ENCODE measurements at regions of chr2 and their contacts with region 1.

Region 1: DNA sequence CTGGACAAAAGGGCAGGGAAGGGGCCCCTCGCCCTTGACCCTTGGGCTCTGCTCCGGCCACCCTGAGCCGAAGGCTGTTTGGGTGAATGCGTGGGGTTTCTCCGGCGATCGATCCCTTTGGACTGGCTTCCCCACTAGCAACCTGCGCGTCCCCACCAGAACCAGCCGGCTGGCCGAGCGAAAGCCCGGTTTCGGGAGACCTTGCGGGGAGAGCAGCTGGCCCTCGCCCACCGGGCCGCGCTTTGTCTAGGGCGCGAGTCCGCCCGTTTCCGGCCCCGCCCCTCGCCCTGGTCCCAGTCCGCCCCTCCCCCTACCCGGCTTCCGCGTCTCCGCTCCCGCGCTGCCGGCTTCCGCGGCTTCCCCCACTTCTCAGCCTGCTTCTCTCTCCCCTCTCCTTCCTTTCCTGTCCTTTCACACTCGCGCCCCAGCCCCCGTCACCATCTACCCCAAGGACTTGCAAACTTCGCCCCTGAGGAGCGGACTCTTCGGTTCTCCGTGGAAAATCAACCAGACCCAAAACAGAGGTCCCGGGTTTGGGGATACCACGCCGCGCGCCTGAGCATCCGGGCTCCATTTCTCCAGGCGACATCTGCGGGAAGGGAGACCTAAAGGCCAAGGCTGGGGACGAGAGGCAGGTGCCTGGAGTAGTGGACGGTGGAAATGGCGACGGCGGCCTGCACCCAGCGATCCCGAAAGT is 48.0 kb upstream of the ATP6V1B1 start:
- DNase-seq: no peak
- ATAC-seq: no peak
- H3K4me3 ChIP-seq: peak overlapping the region in 4 of 5 experiments; percentile 8 to 43 (median 35)
- H3K4me3 Mint-ChIP-seq: peak overlapping the region; percentile 67
- H3K27ac ChIP-seq: no peak overlapping the region
- H3K27ac Mint-ChIP-seq: peak overlapping the region; percentile 37
- H3K4me1 ChIP-seq: peaks cover 31 to 34% of the 10 kb centered on the region in 2 donors
- H3K4me1 Mint-ChIP-seq: peaks cover 31% of the 10 kb centered on the region
- H3K27me3 ChIP-seq: peaks cover 0 to 71% (median 58%) of the 10 kb centered on the region in 4 experiments
- H3K27me3 Mint-ChIP-seq: peaks cover 85% of the 10 kb centered on the region
- CTCF ChIP-seq: no peak

Region 2: DNA sequence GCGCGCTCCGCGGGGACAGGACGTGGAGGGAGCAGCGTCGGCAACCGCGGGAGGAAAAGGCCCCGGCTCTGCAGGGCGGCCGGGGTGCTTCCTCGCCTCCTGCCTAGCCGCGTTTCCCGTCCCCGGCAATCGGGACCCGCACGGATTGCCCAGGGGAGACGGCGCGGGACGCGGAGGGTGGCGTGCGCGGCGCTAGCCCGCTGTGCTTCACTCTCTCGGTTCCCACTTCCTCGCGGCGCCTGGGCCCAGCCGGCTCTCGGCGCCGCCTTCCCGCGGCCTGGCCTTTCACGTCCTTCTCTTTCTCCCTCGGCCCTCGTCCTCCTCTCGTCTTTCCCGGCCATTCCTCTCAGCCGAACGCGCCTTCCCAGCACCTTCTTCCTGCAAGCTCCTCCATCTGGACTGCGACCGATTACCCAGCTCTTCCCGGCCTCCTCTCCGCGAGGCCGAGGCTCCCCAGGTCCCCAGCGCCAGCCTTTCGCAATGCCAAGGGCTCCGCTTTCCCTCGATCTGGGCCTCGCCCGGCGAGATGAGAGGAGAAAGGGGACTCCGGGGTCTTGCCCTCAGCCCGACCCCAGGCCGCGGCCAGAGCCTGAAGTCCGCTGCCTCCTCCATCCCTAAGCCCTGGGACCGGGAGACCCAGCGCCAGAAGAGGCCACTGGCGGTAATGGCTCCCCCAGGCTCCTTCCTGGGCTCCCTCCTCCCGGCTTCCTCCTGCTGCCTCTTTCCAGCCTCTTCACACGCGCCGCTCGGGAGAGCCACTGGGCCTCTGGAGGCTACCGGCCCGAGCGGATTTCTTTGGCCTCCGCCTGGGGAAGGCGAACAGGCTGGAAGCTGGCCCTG is 13.7 kb after region 1 on chr2:
- CTCF ChIA-PET with region 1: no interaction called
- POLR2A ChIA-PET with region 1: no interaction called
- intact Hi-C with region 1: loop called (anchors 2 kb)
- DNase-seq: peak; percentile 47
- ATAC-seq: no peak
- H3K4me3 ChIP-seq: peak overlapping the region in 3 of 5 experiments; percentile 18 to 29 (median 29)
- H3K4me3 Mint-ChIP-seq: peak overlapping the region; percentile 64
- H3K27ac ChIP-seq: no peak overlapping the region
- H3K27ac Mint-ChIP-seq: no peak overlapping the region
- H3K4me1 ChIP-seq: peaks cover 29 to 34% of the 10 kb centered on the region in 2 donors
- H3K4me1 Mint-ChIP-seq: peaks cover 27% of the 10 kb centered on the region
- H3K27me3 ChIP-seq: peaks cover 0 to 96% (median 60%) of the 10 kb centered on the region in 4 experiments
- H3K27me3 Mint-ChIP-seq: peaks cover 75% of the 10 kb centered on the region
- CTCF ChIP-seq: no peak

Region 3: DNA sequence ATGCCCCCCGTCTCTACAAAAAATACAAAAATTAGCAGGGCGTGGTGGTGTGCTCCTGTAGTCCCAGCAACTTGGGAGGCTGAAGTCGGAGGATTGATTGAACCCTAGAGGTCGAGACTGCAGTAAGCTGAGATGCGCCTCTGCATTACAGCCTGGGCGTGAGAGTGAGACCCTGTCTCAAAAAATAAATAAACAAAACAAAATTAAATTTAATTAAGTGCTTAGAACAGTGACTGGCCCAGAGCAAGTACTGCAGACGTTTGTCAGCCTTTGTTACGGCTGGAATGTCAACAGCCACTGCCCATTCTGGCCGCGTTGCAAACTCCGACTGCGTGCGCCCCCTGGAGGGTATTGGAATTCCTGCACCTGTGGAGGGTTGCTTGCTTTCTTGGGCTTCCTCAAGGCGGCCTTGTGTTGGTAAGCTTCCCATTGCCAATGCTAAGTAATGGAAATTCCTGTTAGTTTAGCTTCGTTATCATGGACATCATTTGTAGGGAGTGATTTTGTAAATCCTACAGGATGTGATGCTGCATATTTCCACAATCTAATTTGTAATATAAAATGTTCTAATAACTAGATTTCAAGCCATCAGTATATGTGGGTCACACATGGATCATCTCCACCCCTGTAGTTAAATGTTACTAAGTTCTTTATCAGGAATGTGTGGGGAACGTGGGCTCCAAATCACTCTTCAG is 32.1 kb after region 1 on chr2:
- CTCF ChIA-PET with region 1: no interaction called
- POLR2A ChIA-PET with region 1: no interaction called
- intact Hi-C with region 1: no loop called
- DNase-seq: peak; percentile 56
- ATAC-seq: peak; percentile 39
- H3K4me3 ChIP-seq: no peak overlapping the region
- H3K4me3 Mint-ChIP-seq: no peak overlapping the region
- H3K27ac ChIP-seq: no peak overlapping the region
- H3K27ac Mint-ChIP-seq: no peak overlapping the region
- H3K4me1 ChIP-seq: no peaks in the 10 kb centered on the region
- H3K4me1 Mint-ChIP-seq: no peaks in the 10 kb centered on the region
- H3K27me3 ChIP-seq: peaks cover 0 to 24% (median 2%) of the 10 kb centered on the region in 4 experiments
- H3K27me3 Mint-ChIP-seq: peaks cover 50% of the 10 kb centered on the region
- CTCF ChIP-seq: peak; percentile 75